ENCODE measurements at regions of chr17 and their contacts with region 1.

Region 1: GRCh38 chr17:50200457-50201275 is 765 bp downstream of the COL1A1 start:
- DNase-seq: no peak
- H3K4me3 ChIP-seq: peak overlapping the region; percentile 100
- CTCF ChIP-seq: peak; percentile 80

Region 2: GRCh38 chr17:50169121-50169764 is 31.4 kb before region 1 on chr17:
- CTCF ChIA-PET with region 1: interaction called, 8 read pairs
- POLR2A ChIA-PET with region 1: interaction called, 1,416 read pairs
- DNase-seq: no peak
- H3K4me3 ChIP-seq: no peak overlapping the region
- CTCF ChIP-seq: peak; percentile 84

Region 3: DNA sequence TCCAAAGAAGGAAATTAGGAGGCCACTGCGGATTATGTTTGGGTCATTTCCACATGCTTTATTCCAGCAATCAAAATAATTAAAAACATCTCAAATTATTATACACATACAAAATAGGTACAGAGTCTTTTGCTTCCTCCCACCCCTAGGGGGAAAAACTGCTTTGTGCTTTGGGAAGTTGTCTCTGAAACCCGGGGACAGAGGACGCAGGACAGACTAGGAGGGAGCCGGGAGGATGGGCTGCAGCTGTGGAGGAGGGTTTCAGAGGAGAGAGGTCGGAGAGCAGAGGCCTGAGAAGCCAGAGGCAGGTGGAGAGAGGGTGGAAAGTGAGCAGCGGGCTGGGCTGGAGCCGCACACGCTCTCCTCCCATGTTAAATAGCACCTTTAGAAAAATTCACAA is 16.6 kb before region 1 on chr17:
- CTCF ChIA-PET with region 1: interaction called, 5 read pairs
- POLR2A ChIA-PET with region 1: interaction called, 1,416 read pairs
- DNase-seq: no peak
- H3K4me3 ChIP-seq: no peak overlapping the region; the same call in 1 of the 2 replicates
- CTCF ChIP-seq: peak; percentile 24

Region 4: GRCh38 chr17:50238601-50239280 is 38.1 kb after region 1 on chr17:
- CTCF ChIA-PET with region 1: interaction called, 4 read pairs
- POLR2A ChIA-PET with region 1: interaction called, 44 read pairs
- DNase-seq: no peak
- H3K4me3 ChIP-seq: no peak overlapping the region
- CTCF ChIP-seq: no peak

Region 5: GRCh38 chr17:50289991-50290702 is 89.5 kb after region 1 on chr17:
- CTCF ChIA-PET with region 1: interaction called, 12 read pairs
- POLR2A ChIA-PET with region 1: interaction called, 48 read pairs
- DNase-seq: peak; percentile 96
- H3K4me3 ChIP-seq: peak overlapping the region; percentile 52
- CTCF ChIP-seq: no peak